Activated naive CD4-positive, alpha-beta T cell treated with anti-CD3 and anti-CD28 coated beads, Interleukin-2, amount 10 ng/mL, durations not matched to agents 7 days and 5 days (primary cell): ENCODE measurements at regions of chr13 and their contacts with region 1.

Region 1: GRCh38 chr13:59677966-59678814 is 485.5 kb downstream of the DIAPH3 start:
- DNase-seq: peak; percentile 20
- H3K4me3 Mint-ChIP-seq: no peak overlapping the region
- H3K27ac Mint-ChIP-seq: no peak overlapping the region
- H3K4me1 Mint-ChIP-seq: no peaks in the 10 kb centered on the region
- H3K27me3 Mint-ChIP-seq: no peaks in the 10 kb centered on the region

Region 2: DNA sequence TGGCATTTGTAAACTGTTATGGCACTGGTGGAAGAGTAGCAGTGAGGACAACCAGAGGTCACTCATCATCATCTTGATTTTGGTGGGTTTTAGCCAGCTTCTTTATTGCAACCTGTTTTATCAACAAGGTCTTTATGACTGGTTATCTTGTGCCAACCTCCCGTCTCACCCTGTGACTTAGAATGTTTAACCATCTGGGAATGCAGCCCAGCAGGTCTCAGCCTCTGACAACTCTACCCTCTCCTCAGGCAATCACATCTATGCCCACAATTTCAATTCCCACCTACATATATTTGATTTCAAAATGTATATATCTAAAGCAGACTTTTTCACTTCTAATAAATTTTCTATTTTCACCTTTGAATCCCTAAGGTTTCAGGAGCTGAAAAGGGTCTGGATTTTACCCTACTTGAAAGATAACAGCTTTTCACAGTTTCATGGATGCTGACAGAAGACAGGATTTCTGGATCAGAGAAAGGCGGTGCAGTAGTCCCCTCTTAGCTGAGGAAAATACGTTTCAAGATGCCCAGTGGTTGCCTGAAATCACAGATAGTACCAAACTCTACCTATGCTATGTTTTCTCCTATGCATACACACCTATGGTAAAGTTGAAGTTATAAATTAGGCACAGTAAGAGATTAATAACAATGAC is 686.2 kb before region 1 on chr13:
- CTCF ChIA-PET with region 1: no interaction called
- DNase-seq: no peak
- H3K4me3 Mint-ChIP-seq: no peak overlapping the region
- H3K27ac Mint-ChIP-seq: no peak overlapping the region
- H3K4me1 Mint-ChIP-seq: no peaks in the 10 kb centered on the region
- H3K27me3 Mint-ChIP-seq: no peaks in the 10 kb centered on the region

Region 3: DNA sequence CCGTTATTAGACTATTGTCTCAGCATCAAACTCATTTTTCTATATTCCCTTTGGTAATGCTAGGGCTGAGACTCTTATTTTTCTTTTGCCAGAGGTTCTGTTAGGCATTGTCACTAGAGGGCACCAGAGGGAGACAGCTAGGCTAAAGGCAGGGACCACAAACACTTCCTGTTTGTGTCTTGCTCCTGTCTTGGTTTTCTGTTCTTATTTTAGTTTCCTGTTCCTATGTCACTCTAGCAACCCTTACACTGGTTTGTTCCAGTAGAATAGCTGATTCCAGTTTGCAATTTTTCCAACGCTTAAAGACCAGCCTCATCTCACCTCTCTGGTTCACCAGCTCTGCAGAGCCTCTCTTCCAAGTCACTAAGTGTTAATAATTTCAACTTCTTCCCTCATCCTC is 286.5 kb before region 1 on chr13:
- CTCF ChIA-PET with region 1: interaction called, 14 read pairs
- DNase-seq: peak; percentile 73
- H3K4me3 Mint-ChIP-seq: no peak overlapping the region
- H3K27ac Mint-ChIP-seq: no peak overlapping the region
- H3K4me1 Mint-ChIP-seq: no peaks in the 10 kb centered on the region
- H3K27me3 Mint-ChIP-seq: peaks cover 18% of the 10 kb centered on the region

Region 4: DNA sequence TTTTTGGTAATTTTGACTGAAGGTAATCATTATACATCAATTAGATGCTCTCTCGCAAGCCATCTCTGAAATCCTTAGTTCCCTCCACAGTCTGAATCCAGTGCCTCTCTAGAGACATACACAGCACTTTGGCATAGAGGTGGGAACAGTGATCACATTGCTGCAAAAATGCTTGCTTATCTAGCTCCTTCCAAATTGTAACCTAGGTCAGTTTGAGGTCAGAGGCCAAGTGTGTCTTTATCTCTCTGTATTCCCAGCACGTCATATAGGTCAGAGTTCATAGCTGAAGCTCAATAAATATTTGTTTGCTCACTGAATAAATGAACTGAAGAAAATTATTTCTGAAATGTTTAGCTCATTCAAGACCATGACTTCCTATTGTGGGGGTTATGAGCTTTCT is 23.1 kb after region 1 on chr13:
- CTCF ChIA-PET with region 1: no interaction called
- DNase-seq: no peak
- H3K4me3 Mint-ChIP-seq: no peak overlapping the region
- H3K27ac Mint-ChIP-seq: no peak overlapping the region
- H3K4me1 Mint-ChIP-seq: no peaks in the 10 kb centered on the region
- H3K27me3 Mint-ChIP-seq: no peaks in the 10 kb centered on the region